Panc1 (cell line): ENCODE measurements at regions of chr17 and their contacts with region 1.

Region 1: GRCh38 chr17:50064258-50065001 is 8.5 kb downstream of the ITGA3 start:
- DNase-seq: peak; percentile 87
- ATAC-seq: peak; percentile 77
- H3K4me3 ChIP-seq: peak overlapping the region in 1 of 2 experiments; percentile 9; a peak in 2 of 4 replicates
- H3K27ac ChIP-seq: peak overlapping the region; percentile 99
- H3K4me1 ChIP-seq: peaks cover 73% of the 10 kb centered on the region
- H3K27me3 ChIP-seq: no peaks in the 10 kb centered on the region
- CTCF ChIP-seq: no peak

Region 2: GRCh38 chr17:48246612-48247011 is 1817.8 kb before region 1 on chr17:
- CTCF ChIA-PET with region 1: no interaction called
- POLR2A ChIA-PET with region 1: interaction called, 12 read pairs
- in situ Hi-C with region 1: no loop called
- intact Hi-C with region 1: no loop called
- DNase-seq: no peak
- ATAC-seq: peak; percentile 76
- H3K4me3 ChIP-seq: no peak overlapping the region
- H3K27ac ChIP-seq: peak overlapping the region; percentile 69
- H3K4me1 ChIP-seq: peaks cover 47% of the 10 kb centered on the region
- H3K27me3 ChIP-seq: no peaks in the 10 kb centered on the region
- CTCF ChIP-seq: no peak

Region 3: GRCh38 chr17:50114849-50115357 is 50.5 kb after region 1 on chr17:
- CTCF ChIA-PET with region 1: interaction called, 10 read pairs
- POLR2A ChIA-PET with region 1: no interaction called
- in situ Hi-C with region 1: no loop called
- intact Hi-C with region 1: no loop called
- DNase-seq: no peak
- ATAC-seq: peak; percentile 49
- H3K4me3 ChIP-seq: no peak overlapping the region
- H3K27ac ChIP-seq: no peak overlapping the region
- H3K4me1 ChIP-seq: peaks cover 15% of the 10 kb centered on the region
- H3K27me3 ChIP-seq: no peaks in the 10 kb centered on the region
- CTCF ChIP-seq: peak; percentile 91

Region 4: GRCh38 chr17:50139950-50140871 is 75.8 kb after region 1 on chr17:
- CTCF ChIA-PET with region 1: no interaction called
- POLR2A ChIA-PET with region 1: no interaction called
- in situ Hi-C with region 1: no loop called
- intact Hi-C with region 1: no loop called
- DNase-seq: no peak
- ATAC-seq: peak; percentile 89
- H3K4me3 ChIP-seq: no peak overlapping the region
- H3K27ac ChIP-seq: no peak overlapping the region; the same call in 1 of the 2 replicates
- H3K4me1 ChIP-seq: peaks cover 6% of the 10 kb centered on the region; the same call in 1 of the 2 replicates
- H3K27me3 ChIP-seq: no peaks in the 10 kb centered on the region
- CTCF ChIP-seq: peak; percentile 98